ENCODE measurements at regions of chr9 and their contacts with region 1.

Region 1: DNA sequence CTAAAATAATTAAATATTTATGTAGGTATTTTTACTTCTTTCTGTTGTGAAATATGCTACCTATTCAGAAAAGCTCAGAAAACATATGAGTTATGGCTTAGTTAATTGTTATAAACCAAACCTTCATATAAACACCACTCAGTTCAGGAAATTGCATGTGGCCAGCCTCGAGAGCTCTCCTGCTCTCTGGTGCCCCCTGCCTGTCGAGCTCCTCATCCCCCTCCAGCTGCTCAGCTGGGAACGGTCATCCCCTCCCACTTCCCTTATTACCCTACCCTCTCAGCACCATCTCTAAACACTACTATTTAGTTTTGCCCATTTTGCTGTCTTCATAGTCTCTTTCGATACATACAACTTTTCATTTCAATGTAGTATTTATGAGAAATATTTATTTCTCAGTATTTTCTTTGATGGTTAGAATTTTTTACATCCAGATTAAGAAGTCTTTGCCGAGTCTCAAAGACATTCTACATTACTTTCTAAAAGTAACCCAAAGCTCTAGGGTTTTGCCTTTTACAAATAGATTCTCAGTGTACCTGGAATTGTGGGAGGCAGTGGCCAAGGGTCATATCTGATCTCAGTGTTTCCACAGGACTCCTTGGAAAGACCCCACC is 51.2 kb upstream of the SEMA4D start:
- DNase-seq: peak; percentile 94
- H3K4me3 Mint-ChIP-seq: no peak overlapping the region
- H3K27ac Mint-ChIP-seq: peak overlapping the region; percentile 74
- H3K4me1 Mint-ChIP-seq: peaks cover 18% of the 10 kb centered on the region
- H3K27me3 Mint-ChIP-seq: no peaks in the 10 kb centered on the region

Region 2: GRCh38 chr9:89318123-89319014 is 230.8 kb before region 1 on chr9 and contains the start of gene SECISBP2:
- CTCF ChIA-PET with region 1: interaction called, 6 read pairs
- intact Hi-C with region 1: loop called (anchors 1 kb)
- DNase-seq: peak; percentile 95
- H3K4me3 Mint-ChIP-seq: peak within 1 kb of the TSS; percentile 89
- H3K27ac Mint-ChIP-seq: peak within 1 kb of the TSS; percentile 93
- H3K4me1 Mint-ChIP-seq: peaks cover 79% of the 10 kb centered on the region
- H3K27me3 Mint-ChIP-seq: no peaks in the 10 kb centered on the region
- total RNA-seq, gene SECISBP2: 42.8 to 45.8 TPM

Region 3: GRCh38 chr9:89418882-89419640 is 130.1 kb before region 1 on chr9:
- CTCF ChIA-PET with region 1: interaction called, 12 read pairs
- intact Hi-C with region 1: loop called (anchors 2 kb)
- DNase-seq: peak; percentile 82
- H3K4me3 Mint-ChIP-seq: peak overlapping the region; percentile 53
- H3K27ac Mint-ChIP-seq: peak overlapping the region; percentile 98
- H3K4me1 Mint-ChIP-seq: peaks cover 89% of the 10 kb centered on the region
- H3K27me3 Mint-ChIP-seq: no peaks in the 10 kb centered on the region

Region 4: GRCh38 chr9:89455356-89455824 is 93.7 kb before region 1 on chr9:
- CTCF ChIA-PET with region 1: interaction called, 14 read pairs
- intact Hi-C with region 1: no loop called
- DNase-seq: peak; percentile 63
- H3K4me3 Mint-ChIP-seq: peak overlapping the region; percentile 1
- H3K27ac Mint-ChIP-seq: peak overlapping the region; percentile 79
- H3K4me1 Mint-ChIP-seq: peaks cover 91% of the 10 kb centered on the region
- H3K27me3 Mint-ChIP-seq: no peaks in the 10 kb centered on the region

Region 5: DNA sequence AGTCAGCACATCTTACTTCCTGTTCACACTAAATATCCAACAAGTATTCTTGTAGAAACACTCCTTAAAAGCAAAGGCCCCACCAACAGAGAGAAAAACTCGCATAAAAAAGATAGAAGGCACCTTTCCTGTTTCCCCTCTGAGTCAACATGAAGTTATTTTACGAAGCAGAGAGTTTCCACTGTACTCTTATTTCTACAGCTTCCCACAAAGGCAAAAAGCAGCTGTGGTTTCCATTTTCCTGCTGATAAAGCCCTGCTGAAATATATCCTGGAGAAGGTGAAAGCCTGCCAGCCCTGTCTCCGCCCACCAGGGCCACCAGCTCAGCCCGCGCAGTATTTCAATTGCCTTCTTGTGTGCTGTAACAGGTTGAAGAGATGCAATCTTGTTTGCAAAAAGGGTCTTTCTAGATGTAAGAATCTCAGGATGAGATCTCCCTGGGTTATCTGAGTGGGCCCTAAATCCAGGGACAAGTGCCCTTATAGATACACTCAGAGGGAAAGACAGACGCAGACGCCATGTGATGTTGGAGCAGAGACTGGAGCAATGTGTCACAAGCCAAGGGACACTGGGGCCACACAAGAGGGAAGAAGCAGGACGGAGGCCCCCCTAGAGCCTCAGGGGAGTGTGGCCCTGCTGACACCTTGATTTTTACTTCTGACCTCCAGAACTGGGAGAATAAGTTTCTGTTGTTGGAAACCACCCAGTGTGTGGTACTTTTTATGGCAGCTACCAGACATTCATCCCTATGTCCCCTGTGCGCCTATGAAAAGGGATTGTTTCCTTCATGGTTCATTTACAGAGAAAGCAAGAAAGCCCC is 71.1 kb before region 1 on chr9:
- CTCF ChIA-PET with region 1: interaction called, 19 read pairs
- intact Hi-C with region 1: no loop called
- DNase-seq: peak; percentile 73
- H3K4me3 Mint-ChIP-seq: peak overlapping the region; percentile 78
- H3K27ac Mint-ChIP-seq: peak overlapping the region; percentile 97
- H3K4me1 Mint-ChIP-seq: peaks cover 89% of the 10 kb centered on the region
- H3K27me3 Mint-ChIP-seq: no peaks in the 10 kb centered on the region

Region 6: GRCh38 chr9:89497978-89498851 is 50.9 kb before region 1 on chr9 and contains the start of gene SEMA4D:
- CTCF ChIA-PET with region 1: interaction called, 14 read pairs
- intact Hi-C with region 1: loop called (anchors 1 kb)
- DNase-seq: peak; percentile 84
- H3K4me3 Mint-ChIP-seq: peak within 1 kb of the TSS; percentile 89
- H3K27ac Mint-ChIP-seq: peak within 1 kb of the TSS; percentile 93
- H3K4me1 Mint-ChIP-seq: peaks cover 73% of the 10 kb centered on the region
- H3K27me3 Mint-ChIP-seq: no peaks in the 10 kb centered on the region
- total RNA-seq, gene SEMA4D: 156 to 160 TPM

Region 7: DNA sequence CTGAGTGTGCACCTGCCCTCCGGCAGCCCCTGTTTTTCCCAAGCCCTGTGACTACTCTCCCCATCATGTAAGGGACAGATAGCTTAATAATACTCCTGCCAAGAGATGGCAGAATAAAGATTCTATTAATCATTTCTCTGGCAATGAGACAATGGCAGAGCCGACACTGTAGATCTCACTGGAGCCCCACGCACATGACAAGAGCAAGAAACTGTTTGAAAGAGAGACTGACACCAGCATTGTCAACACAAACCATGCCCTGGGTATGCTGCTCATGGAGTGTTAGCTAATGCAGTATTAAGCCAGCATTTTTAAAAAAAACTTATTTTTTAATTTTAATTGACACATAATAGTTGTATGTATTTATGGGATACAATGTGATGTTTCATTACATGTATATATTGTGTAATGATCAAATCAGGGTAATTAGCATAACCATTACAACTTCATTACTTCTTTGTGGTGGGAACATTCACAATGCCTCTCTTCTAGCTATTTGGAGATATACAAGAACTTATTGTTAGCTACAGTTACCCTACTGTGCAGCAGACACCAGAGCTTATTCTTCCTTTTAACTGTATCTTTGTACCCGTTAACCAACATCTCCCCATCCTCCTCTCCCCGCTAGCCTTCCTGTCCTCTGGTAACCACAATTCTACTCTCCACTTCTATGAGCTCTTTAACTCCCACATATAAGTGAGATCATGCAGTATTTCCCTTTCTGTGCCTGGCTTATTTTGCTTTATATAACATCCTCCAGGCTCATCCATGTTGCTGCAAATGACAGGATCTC is 19.7 kb before region 1 on chr9:
- CTCF ChIA-PET with region 1: interaction called, 17 read pairs
- intact Hi-C with region 1: no loop called
- DNase-seq: peak; percentile 37
- H3K4me3 Mint-ChIP-seq: peak overlapping the region; percentile 8
- H3K27ac Mint-ChIP-seq: peak overlapping the region; percentile 16
- H3K4me1 Mint-ChIP-seq: peaks cover 94% of the 10 kb centered on the region
- H3K27me3 Mint-ChIP-seq: no peaks in the 10 kb centered on the region

Region 8: GRCh38 chr9:89742660-89743572 is 193.8 kb after region 1 on chr9:
- CTCF ChIA-PET with region 1: no interaction called
- intact Hi-C with region 1: no loop called
- DNase-seq: peak; percentile 22
- H3K4me3 Mint-ChIP-seq: no peak overlapping the region
- H3K27ac Mint-ChIP-seq: peak overlapping the region; percentile 85
- H3K4me1 Mint-ChIP-seq: peaks cover 61% of the 10 kb centered on the region
- H3K27me3 Mint-ChIP-seq: no peaks in the 10 kb centered on the region

Measured in activated naive CD4-positive, alpha-beta T cell treated with anti-CD3 and anti-CD28 coated beads for 36 hours (primary cell).